ENCODE measurements at regions of chr5 and their contacts with region 1.

Region 1: GRCh38 chr5:10289991-10290390 is 17.7 kb downstream of the CMBL start:
- DNase-seq: peak; percentile 90 to 93
- ATAC-seq: peak; percentile 62 to 67
- H3K4me3 ChIP-seq: peak overlapping the region; percentile 24 to 49 (median 36)
- H3K27ac ChIP-seq: peak overlapping the region; percentile 91 to 100 (median 96)
- H3K4me1 ChIP-seq: peaks cover 40 to 57% of the 10 kb centered on the region in 2 donors
- H3K27me3 ChIP-seq: no peaks in the 10 kb centered on the region
- CTCF ChIP-seq: no peak
- POLR2A ChIP-seq: peak; percentile 68 to 70

Region 2: DNA sequence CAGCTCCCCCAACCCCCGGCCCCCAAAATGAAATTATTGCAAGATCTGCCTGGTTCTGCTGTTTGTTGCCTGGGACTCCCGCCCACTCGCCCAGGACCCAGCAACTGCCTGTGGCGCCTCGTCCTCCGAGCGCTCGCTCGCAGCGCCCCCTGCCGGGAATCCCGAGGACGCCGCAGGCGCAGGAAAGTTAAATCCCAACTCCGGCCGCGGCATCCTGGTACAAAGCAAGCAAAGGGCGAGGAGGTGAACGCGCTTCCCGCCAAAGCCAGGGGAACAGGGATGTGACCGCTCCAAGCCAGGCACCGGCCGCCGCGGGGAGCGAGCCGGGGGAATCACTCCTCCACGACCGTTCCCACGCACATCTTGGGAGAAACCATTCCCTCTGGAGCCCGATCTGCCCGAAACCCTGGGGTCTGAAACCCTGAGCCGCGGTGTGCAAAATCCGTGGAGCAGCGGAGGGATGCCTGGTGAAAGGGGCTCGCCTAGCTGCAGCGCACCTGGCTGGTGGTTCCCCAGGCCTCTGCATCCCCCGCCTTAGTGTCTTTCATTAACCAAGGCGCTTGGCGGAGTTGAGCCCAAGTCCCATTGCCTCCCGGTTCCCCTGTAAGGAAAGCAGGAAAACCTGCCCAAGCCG is 745.4 kb before region 1 on chr5:
- in situ Hi-C with region 1: no loop called
- intact Hi-C with region 1: no loop called
- DNase-seq: peak; percentile 39 to 58
- ATAC-seq: peak; percentile 75 to 77
- H3K4me3 ChIP-seq: peak overlapping the region; percentile 60 to 75 (median 68)
- H3K27ac ChIP-seq: peak overlapping the region; percentile 31 to 52 (median 48)
- H3K4me1 ChIP-seq: peaks cover 10 to 12% of the 10 kb centered on the region in 2 donors
- H3K27me3 ChIP-seq: peaks cover 0 to 7% (median 6%) of the 10 kb centered on the region in 3 donors
- CTCF ChIP-seq: peak; percentile 55 to 85 (median 79)
- POLR2A ChIP-seq: no peak

Region 3: DNA sequence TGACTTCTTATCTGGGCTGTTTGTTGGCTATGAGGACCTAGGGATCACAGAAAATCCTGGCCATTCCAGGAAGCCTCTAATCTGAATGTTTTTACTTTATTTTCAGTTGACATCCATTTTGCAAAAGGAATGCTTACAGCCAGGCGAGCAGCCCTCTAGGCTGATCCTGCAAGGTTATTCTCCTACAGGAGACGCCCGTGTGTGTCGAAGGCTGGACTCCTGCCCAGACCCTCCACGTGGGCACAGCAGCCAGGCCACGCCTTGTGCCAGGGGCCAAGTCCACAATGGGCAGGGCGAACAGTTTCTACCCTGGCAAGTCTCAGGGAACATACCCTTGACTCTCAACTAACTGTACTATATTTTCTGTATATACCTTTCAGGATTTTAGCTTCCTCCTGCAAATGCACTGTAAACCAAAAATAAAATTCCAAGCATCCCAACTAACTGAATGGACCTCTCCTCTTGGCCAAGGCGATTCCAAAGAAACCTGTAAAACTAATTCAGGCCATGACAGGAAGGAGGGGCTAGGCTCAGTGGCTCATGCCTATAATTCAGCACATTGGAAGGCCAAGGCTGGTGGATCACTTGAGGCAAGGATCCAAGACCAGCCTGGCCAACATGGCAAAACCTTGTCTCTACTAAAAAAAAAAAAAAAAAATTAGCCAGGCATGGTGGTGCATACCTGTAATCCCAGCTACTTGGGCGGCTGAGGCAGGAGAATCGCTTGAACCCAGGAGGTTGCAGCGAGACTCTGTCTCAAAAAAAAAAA is 12.0 kb after region 1 on chr5:
- in situ Hi-C with region 1: no loop called
- intact Hi-C with region 1: loop called (anchors 1 kb)
- DNase-seq: peak; percentile 91 to 97
- ATAC-seq: peak; percentile 76 to 83
- H3K4me3 ChIP-seq: peak overlapping the region; percentile 39 to 62 (median 52)
- H3K27ac ChIP-seq: peak overlapping the region; percentile 91 to 98 (median 94)
- H3K4me1 ChIP-seq: peaks cover 53 to 73% of the 10 kb centered on the region in 2 donors
- H3K27me3 ChIP-seq: no peaks in the 10 kb centered on the region
- CTCF ChIP-seq: no peak
- POLR2A ChIP-seq: peak; percentile 70

Region 4: GRCh38 chr5:10339058-10339811 is 49.2 kb after region 1 on chr5:
- in situ Hi-C with region 1: no loop called
- intact Hi-C with region 1: no loop called
- DNase-seq: no peak
- ATAC-seq: no peak
- H3K4me3 ChIP-seq: no peak overlapping the region
- H3K27ac ChIP-seq: no peak overlapping the region
- H3K4me1 ChIP-seq: peaks cover under 1 to 9% of the 10 kb centered on the region in 2 donors
- H3K27me3 ChIP-seq: no peaks in the 10 kb centered on the region
- CTCF ChIP-seq: no peak
- POLR2A ChIP-seq: no peak

Measured in gastrocnemius medialis (tissue), 4 donors.